ENCODE measurements at regions of chr19 and their contacts with region 1.

Region 1: GRCh38 chr19:49497047-49497788 is 984 bp downstream of the RPS11 start:
- DNase-seq: peak; percentile 52 to 93 (median 73)
- ATAC-seq: peak; percentile 19
- H3K4me3 ChIP-seq: peak overlapping the region; percentile 99
- H3K4me3 Mint-ChIP-seq: peak overlapping the region; percentile 99
- H3K27ac ChIP-seq: peak overlapping the region; percentile 94 to 96
- H3K27ac Mint-ChIP-seq: peak overlapping the region; percentile 98
- H3K4me1 ChIP-seq: peaks cover 72% of the 10 kb centered on the region
- H3K4me1 Mint-ChIP-seq: peaks cover 70% of the 10 kb centered on the region
- H3K27me3 ChIP-seq: no peaks in the 10 kb centered on the region
- H3K27me3 Mint-ChIP-seq: no peaks in the 10 kb centered on the region
- CTCF ChIP-seq: no peak

Region 2: GRCh38 chr19:49468746-49469447 is 28.3 kb before region 1 on chr19:
- CTCF ChIA-PET with region 1: interaction called, 8 read pairs
- POLR2A ChIA-PET with region 1: interaction called, 25 read pairs
- intact Hi-C with region 1: loop called in 1 of 2 experiments (anchors 2 kb)
- DNase-seq: peak; percentile 74 to 99 (median 84)
- ATAC-seq: peak; percentile 75
- H3K4me3 ChIP-seq: peak overlapping the region; percentile 9
- H3K4me3 Mint-ChIP-seq: peak overlapping the region; percentile 84
- H3K27ac ChIP-seq: peak overlapping the region; percentile 86 to 96
- H3K27ac Mint-ChIP-seq: peak overlapping the region; percentile 98
- H3K4me1 ChIP-seq: peaks cover 96% of the 10 kb centered on the region
- H3K4me1 Mint-ChIP-seq: peaks cover 42% of the 10 kb centered on the region
- H3K27me3 ChIP-seq: no peaks in the 10 kb centered on the region
- H3K27me3 Mint-ChIP-seq: no peaks in the 10 kb centered on the region
- CTCF ChIP-seq: no peak

Region 3: DNA sequence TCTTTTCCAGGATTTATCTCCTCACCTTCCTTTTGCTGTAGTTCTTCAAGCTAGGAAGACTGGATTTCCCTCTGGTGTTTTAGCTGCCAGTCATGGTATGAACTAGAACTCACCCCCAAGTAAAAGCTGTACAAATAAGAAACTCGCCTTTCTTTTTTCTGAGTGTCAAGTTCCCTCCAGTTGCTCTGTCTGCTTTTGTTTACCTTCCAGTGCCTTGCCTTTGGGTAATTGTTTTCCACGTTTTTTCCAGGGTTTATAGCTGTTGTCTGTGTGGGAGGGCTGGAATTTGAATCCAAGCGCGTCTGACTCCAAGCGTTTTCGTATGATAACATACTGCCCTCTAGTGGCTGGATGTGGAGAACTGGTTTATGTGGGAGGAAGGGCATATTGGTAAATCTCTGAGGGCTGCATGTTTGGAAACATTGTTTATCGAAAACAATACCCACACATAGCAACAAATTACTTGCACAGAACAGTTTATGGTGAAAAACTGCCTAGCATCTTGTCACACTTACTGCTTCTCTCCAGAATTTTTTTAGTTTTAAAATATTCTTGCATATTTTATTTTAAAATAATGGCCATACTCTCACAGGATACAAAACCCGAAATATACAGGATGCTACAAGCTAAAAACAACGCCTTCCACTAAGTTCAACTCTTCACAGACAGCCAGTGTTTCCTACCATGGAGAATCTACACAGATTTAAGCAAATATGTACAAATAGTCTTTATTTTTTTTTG is 49.8 kb after region 1 on chr19:
- CTCF ChIA-PET with region 1: interaction called, 18 read pairs
- POLR2A ChIA-PET with region 1: interaction called, 12 read pairs
- intact Hi-C with region 1: no loop called
- DNase-seq: peak in 6 of 14 experiments; percentile 59 to 90 (median 82)
- ATAC-seq: peak; percentile 79
- H3K4me3 ChIP-seq: peak overlapping the region; percentile 30
- H3K4me3 Mint-ChIP-seq: peak overlapping the region; percentile 85
- H3K27ac ChIP-seq: no peak overlapping the region
- H3K27ac Mint-ChIP-seq: peak overlapping the region; percentile 74
- H3K4me1 ChIP-seq: peaks cover 64% of the 10 kb centered on the region
- H3K4me1 Mint-ChIP-seq: peaks cover 54% of the 10 kb centered on the region
- H3K27me3 ChIP-seq: no peaks in the 10 kb centered on the region
- H3K27me3 Mint-ChIP-seq: no peaks in the 10 kb centered on the region
- CTCF ChIP-seq: peak; percentile 93

Region 4: GRCh38 chr19:49580264-49581006 is 83.2 kb after region 1 on chr19 and contains the start of gene NOSIP:
- CTCF ChIA-PET with region 1: no interaction called
- POLR2A ChIA-PET with region 1: interaction called, 14 read pairs
- intact Hi-C with region 1: no loop called
- DNase-seq: peak; percentile 93 to 98 (median 96)
- ATAC-seq: peak; percentile 98
- H3K4me3 ChIP-seq: peak within 1 kb of the TSS; percentile 75
- H3K4me3 Mint-ChIP-seq: peak within 1 kb of the TSS; percentile 90
- H3K27ac ChIP-seq: peak within 1 kb of the TSS in 1 of 2 donors; percentile 8
- H3K27ac Mint-ChIP-seq: peak within 1 kb of the TSS; percentile 67
- H3K4me1 ChIP-seq: peaks cover 18% of the 10 kb centered on the region
- H3K4me1 Mint-ChIP-seq: peaks cover 33% of the 10 kb centered on the region
- H3K27me3 ChIP-seq: no peaks in the 10 kb centered on the region
- H3K27me3 Mint-ChIP-seq: no peaks in the 10 kb centered on the region
- CTCF ChIP-seq: no peak
- total RNA-seq, gene NOSIP: 202 to 203 TPM

Region 5: GRCh38 chr19:49640113-49640898 is 143.1 kb after region 1 on chr19 and contains the start of gene RRAS:
- CTCF ChIA-PET with region 1: no interaction called
- POLR2A ChIA-PET with region 1: interaction called, 45 read pairs
- intact Hi-C with region 1: no loop called
- DNase-seq: peak; percentile 97 to 100 (median 99)
- ATAC-seq: peak; percentile 66
- H3K4me3 ChIP-seq: peak within 1 kb of the TSS; percentile 78
- H3K4me3 Mint-ChIP-seq: peak within 1 kb of the TSS; percentile 95
- H3K27ac ChIP-seq: peak within 1 kb of the TSS; percentile 91 to 96
- H3K27ac Mint-ChIP-seq: peak within 1 kb of the TSS; percentile 97
- H3K4me1 ChIP-seq: peaks cover 64% of the 10 kb centered on the region
- H3K4me1 Mint-ChIP-seq: peaks cover 65% of the 10 kb centered on the region
- H3K27me3 ChIP-seq: no peaks in the 10 kb centered on the region
- H3K27me3 Mint-ChIP-seq: no peaks in the 10 kb centered on the region
- CTCF ChIP-seq: no peak
- total RNA-seq, gene RRAS: 4.2 to 4.7 TPM

Region 6: DNA sequence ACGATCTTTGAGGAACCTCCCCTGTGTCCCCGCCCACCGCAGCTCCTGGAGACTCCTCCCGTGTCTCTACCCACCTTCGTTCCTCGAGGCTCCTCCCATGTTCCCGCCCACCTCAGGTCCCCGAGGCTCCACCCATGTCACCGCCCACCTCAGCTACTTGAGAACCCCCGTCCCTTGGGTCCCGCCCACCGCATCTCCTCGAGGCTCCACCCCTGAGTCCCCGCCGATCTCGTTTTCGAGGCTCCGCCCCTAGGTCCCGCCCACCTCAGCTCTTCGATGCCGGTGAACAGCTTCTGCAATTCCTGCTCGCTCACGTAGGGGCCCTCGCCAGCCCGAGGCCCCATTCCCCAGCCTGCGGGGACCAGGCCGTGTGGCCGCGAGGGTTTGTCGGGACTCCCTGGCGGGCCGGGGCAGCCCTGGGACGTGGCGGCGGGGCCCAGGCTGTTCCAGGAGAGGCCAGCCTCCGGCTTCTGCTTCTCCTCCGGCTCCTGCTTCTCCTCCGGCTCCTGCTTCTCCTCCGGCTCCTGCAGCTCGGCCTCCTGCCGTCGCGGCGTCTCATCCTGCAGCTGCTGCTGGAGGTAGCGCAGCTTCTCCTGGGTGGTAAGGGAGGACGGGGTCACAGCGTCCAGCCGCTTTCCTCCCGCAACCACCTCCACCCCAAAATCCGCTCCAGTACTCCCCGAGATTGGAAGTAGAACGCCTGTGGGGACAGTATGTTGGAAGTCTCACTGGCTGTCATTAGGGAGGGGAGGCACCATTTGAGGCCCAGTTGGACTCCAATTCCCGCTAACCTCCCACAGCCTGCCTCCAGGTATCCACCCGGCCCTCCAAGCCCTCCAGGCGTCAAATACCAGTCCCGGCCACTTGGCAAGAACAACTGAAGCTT is 249.2 kb after region 1 on chr19:
- CTCF ChIA-PET with region 1: no interaction called
- POLR2A ChIA-PET with region 1: no interaction called
- intact Hi-C with region 1: no loop called
- DNase-seq: peak in 11 of 14 experiments; percentile 3 to 80 (median 45)
- ATAC-seq: peak; percentile 81
- H3K4me3 ChIP-seq: no peak overlapping the region
- H3K4me3 Mint-ChIP-seq: no peak overlapping the region
- H3K27ac ChIP-seq: no peak overlapping the region
- H3K27ac Mint-ChIP-seq: no peak overlapping the region
- H3K4me1 ChIP-seq: peaks cover 6% of the 10 kb centered on the region
- H3K4me1 Mint-ChIP-seq: no peaks in the 10 kb centered on the region
- H3K27me3 ChIP-seq: no peaks in the 10 kb centered on the region
- H3K27me3 Mint-ChIP-seq: no peaks in the 10 kb centered on the region
- CTCF ChIP-seq: no peak

Region 7: GRCh38 chr19:49817964-49818648 is 320.9 kb after region 1 on chr19 and contains the start of gene MED25:
- CTCF ChIA-PET with region 1: no interaction called
- POLR2A ChIA-PET with region 1: interaction called, 4 read pairs
- intact Hi-C with region 1: loop called in 1 of 2 experiments (anchors 10 kb)
- DNase-seq: peak; percentile 78 to 96 (median 86)
- ATAC-seq: peak; percentile 60
- H3K4me3 ChIP-seq: peak within 1 kb of the TSS; percentile 66
- H3K4me3 Mint-ChIP-seq: peak within 1 kb of the TSS; percentile 99
- H3K27ac ChIP-seq: peak within 1 kb of the TSS; percentile 96 to 97
- H3K27ac Mint-ChIP-seq: peak within 1 kb of the TSS; percentile 99
- H3K4me1 ChIP-seq: peaks cover 34% of the 10 kb centered on the region
- H3K4me1 Mint-ChIP-seq: peaks cover 35% of the 10 kb centered on the region
- H3K27me3 ChIP-seq: no peaks in the 10 kb centered on the region
- H3K27me3 Mint-ChIP-seq: no peaks in the 10 kb centered on the region
- CTCF ChIP-seq: peak; percentile 38
- total RNA-seq, gene MED25: 67.2 to 67.8 TPM